Naive thymus-derived CD4-positive, alpha-beta T cell (primary cell): ENCODE measurements at regions of chrX and their contacts with region 1.

Region 1: DNA sequence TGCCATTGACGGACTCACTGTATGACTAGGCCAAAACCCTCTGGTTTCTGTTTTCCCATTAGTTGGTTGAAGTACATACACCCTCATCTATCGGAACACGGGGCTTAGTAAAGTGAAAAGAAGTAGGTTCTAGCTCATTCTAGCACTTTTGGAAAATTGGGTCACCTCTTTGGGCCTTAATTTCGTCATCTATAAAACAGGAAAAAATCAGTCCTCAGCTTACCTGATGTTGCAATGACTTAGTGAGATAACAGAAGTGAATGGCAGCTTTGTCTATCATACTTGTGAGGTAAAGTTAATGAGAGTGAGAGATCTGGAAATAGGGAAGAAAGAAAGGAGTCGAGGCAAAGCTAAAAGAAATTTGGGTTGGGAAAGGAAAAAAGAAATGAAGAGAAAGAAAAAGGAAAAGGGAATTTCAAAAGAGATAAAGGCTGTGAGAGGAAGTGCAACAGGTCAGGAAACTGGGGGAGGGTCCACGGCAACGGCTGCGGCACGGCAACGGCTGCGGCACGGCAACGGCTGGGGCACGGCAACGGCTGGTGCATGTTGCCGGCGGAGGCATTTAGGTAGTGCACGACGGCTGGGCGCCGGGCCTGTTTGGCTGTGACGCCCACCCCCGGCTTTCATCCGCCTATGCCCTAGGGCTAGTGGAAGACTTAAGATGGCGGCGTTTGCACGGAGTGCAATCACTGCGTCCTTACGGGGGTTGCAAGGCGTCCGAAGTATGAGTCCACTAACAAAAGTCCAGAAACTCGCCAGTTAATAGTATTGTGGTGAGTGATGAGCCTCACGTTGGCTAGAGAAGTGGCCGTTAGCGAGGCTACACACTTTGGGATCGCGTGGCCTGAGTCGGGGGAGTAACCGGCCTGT is 360.1 kb upstream of the ZCCHC13 start:
- DNase-seq: peak; percentile 67 to 92 (median 87)
- ATAC-seq: peak; percentile 100
- H3K4me3 ChIP-seq: peak overlapping the region; percentile 98
- H3K4me3 Mint-ChIP-seq: peak overlapping the region; percentile 82 to 98 (median 94)
- H3K27ac ChIP-seq: peak overlapping the region; percentile 93
- H3K27ac Mint-ChIP-seq: peak overlapping the region; percentile 89 to 99 (median 96)
- H3K4me1 ChIP-seq: peaks cover 0 to 10% of the 10 kb centered on the region in 2 donors
- H3K4me1 Mint-ChIP-seq: peaks cover 12 to 49% (median 27%) of the 10 kb centered on the region in 7 donors
- H3K27me3 ChIP-seq: no peaks in the 10 kb centered on the region
- H3K27me3 Mint-ChIP-seq: peaks cover 0 to 2% (median 0%) of the 10 kb centered on the region in 5 donors

Region 2: GRCh38 chrX:72572248-72573157 is 1371.4 kb before region 1 on chrX and contains the start of gene HDAC8:
- CTCF ChIA-PET with region 1: no interaction called
- POLR2A ChIA-PET with region 1: no interaction called
- intact Hi-C with region 1: loop called in 1 of 2 experiments (anchors 5 kb)
- DNase-seq: peak; percentile 7 to 49 (median 29)
- ATAC-seq: peak; percentile 91
- H3K4me3 ChIP-seq: peak within 1 kb of the TSS; percentile 97
- H3K4me3 Mint-ChIP-seq: peak within 1 kb of the TSS; percentile 91 to 98 (median 96)
- H3K27ac ChIP-seq: peak within 1 kb of the TSS; percentile 71
- H3K27ac Mint-ChIP-seq: peak within 1 kb of the TSS; percentile 36 to 91 (median 87)
- H3K4me1 ChIP-seq: peaks cover 4 to 6% of the 10 kb centered on the region in 2 donors
- H3K4me1 Mint-ChIP-seq: peaks cover 0 to 10% (median 6%) of the 10 kb centered on the region in 7 donors
- H3K27me3 ChIP-seq: no peaks in the 10 kb centered on the region
- H3K27me3 Mint-ChIP-seq: peaks cover 0 to 11% (median 0%) of the 10 kb centered on the region in 5 donors
- total RNA-seq, gene HDAC8: 13.1 to 30.6 (median 19.7) TPM

Region 3: DNA sequence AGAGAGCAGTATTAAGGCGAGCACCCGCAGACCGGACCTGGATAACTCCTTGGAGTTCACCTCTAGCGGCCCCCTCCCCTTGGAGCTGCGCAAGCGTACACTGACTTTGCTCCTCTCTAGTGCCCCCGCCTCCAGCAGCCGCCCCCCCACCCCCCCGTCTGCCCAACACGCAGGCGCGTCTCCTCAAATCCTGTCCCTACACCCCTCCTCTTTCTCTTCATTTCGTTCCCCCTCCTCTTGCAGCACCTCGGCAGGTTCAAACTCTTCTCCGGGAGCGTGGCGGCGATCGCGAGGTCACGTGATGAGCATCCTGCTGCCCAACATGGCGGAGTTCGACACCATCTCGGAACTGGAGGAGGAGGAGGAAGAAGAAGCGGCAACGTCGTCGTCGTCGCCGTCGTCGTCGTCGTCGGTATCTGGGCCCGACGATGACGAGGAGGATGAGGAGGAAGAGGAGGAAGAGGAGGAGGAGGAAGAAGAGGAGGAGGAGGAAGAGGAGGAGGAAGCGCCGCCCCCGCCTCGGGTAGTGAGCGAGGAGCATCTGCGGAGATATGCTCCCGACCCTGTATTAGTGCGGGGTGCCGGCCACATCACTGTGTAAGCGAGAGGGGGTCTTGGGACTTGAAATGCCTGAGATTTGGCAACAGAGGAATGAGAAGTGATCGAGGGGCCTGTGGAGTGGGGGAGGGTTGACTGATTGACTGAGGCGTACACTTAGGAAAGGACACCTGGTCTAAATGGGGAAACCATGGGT is 380.8 kb before region 1 on chrX and contains the start of gene CHIC1:
- CTCF ChIA-PET with region 1: no interaction called
- POLR2A ChIA-PET with region 1: no interaction called
- intact Hi-C with region 1: loop called (anchors 1 kb)
- DNase-seq: peak; percentile 33 to 80 (median 71)
- ATAC-seq: peak; percentile 80
- H3K4me3 ChIP-seq: peak within 1 kb of the TSS; percentile 73
- H3K4me3 Mint-ChIP-seq: peak within 1 kb of the TSS; percentile 91 to 99 (median 96)
- H3K27ac ChIP-seq: peak within 1 kb of the TSS; percentile 81
- H3K27ac Mint-ChIP-seq: peak within 1 kb of the TSS; percentile 96 to 100 (median 98)
- H3K4me1 ChIP-seq: no peaks in the 10 kb centered on the region
- H3K4me1 Mint-ChIP-seq: peaks cover 7 to 26% (median 13%) of the 10 kb centered on the region in 7 donors
- H3K27me3 ChIP-seq: no peaks in the 10 kb centered on the region
- H3K27me3 Mint-ChIP-seq: no peaks in the 10 kb centered on the region
- total RNA-seq, gene CHIC1: 7.8 to 17.3 (median 10.7) TPM

Region 4: GRCh38 chrX:73855546-73855945 is 88.4 kb before region 1 on chrX:
- CTCF ChIA-PET with region 1: no interaction called
- POLR2A ChIA-PET with region 1: no interaction called
- intact Hi-C with region 1: no loop called
- DNase-seq: peak; percentile 11 to 81 (median 59)
- ATAC-seq: peak; percentile 64
- H3K4me3 ChIP-seq: no peak overlapping the region
- H3K4me3 Mint-ChIP-seq: no peak overlapping the region
- H3K27ac ChIP-seq: no peak overlapping the region
- H3K27ac Mint-ChIP-seq: no peak overlapping the region
- H3K4me1 ChIP-seq: no peaks in the 10 kb centered on the region
- H3K4me1 Mint-ChIP-seq: peaks cover 0 to 4% (median 0%) of the 10 kb centered on the region in 7 donors
- H3K27me3 ChIP-seq: no peaks in the 10 kb centered on the region
- H3K27me3 Mint-ChIP-seq: no peaks in the 10 kb centered on the region

Region 5: GRCh38 chrX:73903941-73904340 is 40.0 kb before region 1 on chrX:
- CTCF ChIA-PET with region 1: no interaction called
- POLR2A ChIA-PET with region 1: no interaction called
- intact Hi-C with region 1: no loop called
- DNase-seq: no peak
- ATAC-seq: no peak
- H3K4me3 ChIP-seq: no peak overlapping the region
- H3K4me3 Mint-ChIP-seq: no peak overlapping the region
- H3K27ac ChIP-seq: no peak overlapping the region
- H3K27ac Mint-ChIP-seq: no peak overlapping the region
- H3K4me1 ChIP-seq: no peaks in the 10 kb centered on the region
- H3K4me1 Mint-ChIP-seq: no peaks in the 10 kb centered on the region
- H3K27me3 ChIP-seq: no peaks in the 10 kb centered on the region
- H3K27me3 Mint-ChIP-seq: no peaks in the 10 kb centered on the region

Region 6: DNA sequence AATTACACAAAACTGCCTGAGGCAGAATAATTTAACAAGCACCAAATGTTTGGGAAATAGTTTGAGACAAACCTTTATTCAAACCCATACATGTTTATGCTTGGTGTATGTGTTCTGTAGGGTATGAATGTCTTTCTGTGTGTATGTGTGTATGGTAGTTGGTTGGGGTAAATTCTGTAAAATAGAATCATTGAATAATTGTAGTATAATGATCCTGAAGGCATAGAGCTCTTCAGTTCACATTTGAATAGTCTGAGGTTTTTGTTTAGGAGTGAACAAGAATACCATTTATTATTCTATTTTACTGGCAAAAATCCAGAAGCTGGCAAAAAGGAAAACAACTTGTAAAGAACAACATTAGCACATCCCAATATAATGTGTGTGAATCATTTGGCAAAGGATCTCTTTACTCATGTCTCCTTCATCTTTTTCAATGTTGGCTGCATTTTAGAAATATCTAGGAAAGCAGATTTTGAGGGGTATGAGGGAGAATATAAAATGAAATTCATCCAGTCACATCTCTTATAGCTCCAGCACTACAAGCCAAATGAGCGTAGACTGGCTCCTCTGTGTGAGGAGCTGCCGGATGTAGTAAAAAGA is 21.0 kb before region 1 on chrX:
- CTCF ChIA-PET with region 1: no interaction called
- POLR2A ChIA-PET with region 1: no interaction called
- intact Hi-C with region 1: no loop called
- DNase-seq: no peak
- ATAC-seq: no peak
- H3K4me3 ChIP-seq: no peak overlapping the region
- H3K4me3 Mint-ChIP-seq: no peak overlapping the region
- H3K27ac ChIP-seq: no peak overlapping the region
- H3K27ac Mint-ChIP-seq: no peak overlapping the region
- H3K4me1 ChIP-seq: no peaks in the 10 kb centered on the region
- H3K4me1 Mint-ChIP-seq: no peaks in the 10 kb centered on the region
- H3K27me3 ChIP-seq: no peaks in the 10 kb centered on the region
- H3K27me3 Mint-ChIP-seq: no peaks in the 10 kb centered on the region

Region 7: GRCh38 chrX:74015379-74016019 is 71.6 kb after region 1 on chrX:
- CTCF ChIA-PET with region 1: no interaction called
- POLR2A ChIA-PET with region 1: no interaction called
- intact Hi-C with region 1: loop called (anchors 2 to 10 kb)
- DNase-seq: peak; percentile 12 to 81 (median 55)
- ATAC-seq: peak; percentile 77
- H3K4me3 ChIP-seq: no peak overlapping the region
- H3K4me3 Mint-ChIP-seq: no peak overlapping the region
- H3K27ac ChIP-seq: no peak overlapping the region
- H3K27ac Mint-ChIP-seq: peak overlapping the region in 2 of 9 donors; percentile 18 to 37
- H3K4me1 ChIP-seq: no peaks in the 10 kb centered on the region
- H3K4me1 Mint-ChIP-seq: peaks cover 0 to 7% (median 3%) of the 10 kb centered on the region in 7 donors
- H3K27me3 ChIP-seq: no peaks in the 10 kb centered on the region
- H3K27me3 Mint-ChIP-seq: no peaks in the 10 kb centered on the region

Region 8: GRCh38 chrX:74814681-74815080 is 870.8 kb after region 1 on chrX:
- CTCF ChIA-PET with region 1: no interaction called
- POLR2A ChIA-PET with region 1: no interaction called
- intact Hi-C with region 1: no loop called
- DNase-seq: no peak
- ATAC-seq: no peak
- H3K4me3 ChIP-seq: no peak overlapping the region
- H3K4me3 Mint-ChIP-seq: no peak overlapping the region
- H3K27ac ChIP-seq: no peak overlapping the region
- H3K27ac Mint-ChIP-seq: no peak overlapping the region
- H3K4me1 ChIP-seq: no peaks in the 10 kb centered on the region
- H3K4me1 Mint-ChIP-seq: no peaks in the 10 kb centered on the region
- H3K27me3 ChIP-seq: no peaks in the 10 kb centered on the region
- H3K27me3 Mint-ChIP-seq: no peaks in the 10 kb centered on the region

Region 9: GRCh38 chrX:75156021-75156945 is 1212.4 kb after region 1 on chrX and contains the start of gene ABCB7:
- CTCF ChIA-PET with region 1: no interaction called
- POLR2A ChIA-PET with region 1: no interaction called
- intact Hi-C with region 1: loop called in 1 of 2 experiments (anchors 2 kb)
- DNase-seq: peak; percentile 24 to 68 (median 59)
- ATAC-seq: peak; percentile 95
- H3K4me3 ChIP-seq: peak within 1 kb of the TSS; percentile 86
- H3K4me3 Mint-ChIP-seq: peak within 1 kb of the TSS; percentile 87 to 100 (median 95)
- H3K27ac ChIP-seq: peak within 1 kb of the TSS; percentile 75
- H3K27ac Mint-ChIP-seq: peak within 1 kb of the TSS; percentile 92 to 100 (median 96)
- H3K4me1 ChIP-seq: no peaks in the 10 kb centered on the region
- H3K4me1 Mint-ChIP-seq: peaks cover 10 to 63% (median 41%) of the 10 kb centered on the region in 7 donors
- H3K27me3 ChIP-seq: no peaks in the 10 kb centered on the region
- H3K27me3 Mint-ChIP-seq: no peaks in the 10 kb centered on the region
- total RNA-seq, gene ABCB7: 19.4 to 33.0 (median 26.3) TPM